CD8-positive, alpha-beta T cell (primary cell): ENCODE measurements at regions of chr14 and their contacts with region 1.

Region 1: GRCh38 chr14:100375963-100376735 is 53.0 kb downstream of the SLC25A47 start:
- DNase-seq: peak; percentile 86 to 96 (median 90)
- ATAC-seq: peak; percentile 81
- H3K4me3 ChIP-seq: peak within 1 kb of the TSS; percentile 63 to 85
- H3K4me3 Mint-ChIP-seq: peak within 1 kb of the TSS; percentile 92
- H3K27ac ChIP-seq: peak within 1 kb of the TSS; percentile 64 to 90
- H3K27ac Mint-ChIP-seq: peak within 1 kb of the TSS; percentile 91
- H3K4me1 ChIP-seq: peaks cover 23% of the 10 kb centered on the region
- H3K4me1 Mint-ChIP-seq: peaks cover 41% of the 10 kb centered on the region
- H3K27me3 ChIP-seq: no peaks in the 10 kb centered on the region
- H3K27me3 Mint-ChIP-seq: no peaks in the 10 kb centered on the region
- CTCF ChIP-seq: no peak

Region 2: DNA sequence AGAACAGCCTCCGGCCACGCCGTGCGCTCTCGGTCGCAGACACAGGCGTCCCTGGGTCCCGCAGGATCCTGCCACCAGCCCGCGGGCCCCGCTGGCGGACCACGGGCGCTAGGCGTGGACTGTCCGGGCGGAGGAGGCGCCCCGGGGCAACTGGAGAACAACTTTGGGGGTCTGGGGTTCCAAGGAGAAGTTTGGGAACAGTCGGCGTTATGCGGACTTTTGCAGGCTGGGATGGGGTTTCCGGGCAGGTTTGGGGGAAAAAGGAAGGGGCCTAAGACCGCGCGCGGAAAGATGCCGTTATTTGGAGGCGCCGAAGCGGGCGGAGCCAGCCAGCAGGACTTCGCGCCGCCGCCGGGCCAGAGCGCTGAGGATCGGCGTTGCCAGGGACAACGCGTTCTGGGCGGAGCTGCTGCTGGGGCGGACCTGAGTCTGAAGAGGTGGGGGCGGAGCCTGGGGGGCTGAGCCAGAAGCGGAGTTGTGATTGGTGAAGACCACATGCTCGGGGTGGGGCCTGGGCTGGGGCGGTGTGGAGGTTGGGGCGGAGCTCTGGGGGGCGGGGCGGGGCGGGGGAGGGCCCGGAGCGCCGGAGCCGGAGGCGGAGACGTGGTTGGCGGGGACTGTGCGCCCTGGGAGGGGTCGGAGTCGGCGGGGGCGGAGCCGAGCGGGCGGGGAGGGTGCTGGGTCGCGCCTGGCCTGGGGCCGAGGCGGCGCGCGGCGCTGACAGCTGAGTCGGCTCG is 692.4 kb before region 1 on chr14 and contains the start of gene CYP46A1:
- CTCF ChIA-PET with region 1: no interaction called
- POLR2A ChIA-PET with region 1: no interaction called
- intact Hi-C with region 1: loop called in 1 of 2 experiments (anchors 5 kb)
- DNase-seq: peak; percentile 99 to 100 (median 99)
- ATAC-seq: peak; percentile 95
- H3K4me3 ChIP-seq: peak within 1 kb of the TSS; percentile 83 to 93
- H3K4me3 Mint-ChIP-seq: peak within 1 kb of the TSS; percentile 96
- H3K27ac ChIP-seq: peak within 1 kb of the TSS; percentile 69 to 84
- H3K27ac Mint-ChIP-seq: peak within 1 kb of the TSS; percentile 77
- H3K4me1 ChIP-seq: peaks cover 8% of the 10 kb centered on the region
- H3K4me1 Mint-ChIP-seq: peaks cover 14% of the 10 kb centered on the region
- H3K27me3 ChIP-seq: peaks cover 0 to 10% of the 10 kb centered on the region in 2 experiments
- H3K27me3 Mint-ChIP-seq: peaks cover 7% of the 10 kb centered on the region
- CTCF ChIP-seq: no peak
- total RNA-seq, gene CYP46A1: 0.19 to 0.30 TPM

Region 3: DNA sequence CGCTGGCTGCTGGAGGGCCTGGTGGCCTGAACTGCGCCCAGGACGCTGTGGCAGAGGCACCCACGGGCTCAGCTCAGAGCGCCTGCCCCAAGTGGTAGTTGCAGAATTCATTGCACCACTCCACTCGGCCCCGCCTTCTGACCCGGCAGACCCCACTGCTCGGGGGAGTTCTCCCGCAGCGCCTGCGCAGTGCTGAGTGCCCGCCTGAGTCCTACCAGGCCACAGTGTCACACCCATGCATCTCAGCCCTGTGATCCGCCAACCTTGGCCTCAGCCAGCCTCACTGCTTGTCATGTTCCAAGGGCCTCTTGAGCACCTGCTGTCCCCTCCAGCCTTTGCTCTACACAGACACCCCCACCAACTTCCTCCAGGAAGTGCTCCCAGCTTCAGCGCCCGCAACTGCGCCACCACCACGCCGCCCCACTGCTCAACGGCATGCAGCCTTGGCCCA is 228.9 kb before region 1 on chr14:
- CTCF ChIA-PET with region 1: no interaction called
- POLR2A ChIA-PET with region 1: no interaction called
- intact Hi-C with region 1: loop called in 1 of 2 experiments (anchors 5 kb)
- DNase-seq: peak; percentile 42 to 87 (median 75)
- ATAC-seq: peak; percentile 89
- H3K4me3 ChIP-seq: peak overlapping the region; percentile 24 to 34
- H3K4me3 Mint-ChIP-seq: peak overlapping the region; percentile 77
- H3K27ac ChIP-seq: peak overlapping the region; percentile 3 to 39
- H3K27ac Mint-ChIP-seq: peak overlapping the region; percentile 89
- H3K4me1 ChIP-seq: peaks cover 24% of the 10 kb centered on the region
- H3K4me1 Mint-ChIP-seq: peaks cover 34% of the 10 kb centered on the region
- H3K27me3 ChIP-seq: no peaks in the 10 kb centered on the region
- H3K27me3 Mint-ChIP-seq: no peaks in the 10 kb centered on the region
- CTCF ChIP-seq: peak; percentile 7

Region 4: DNA sequence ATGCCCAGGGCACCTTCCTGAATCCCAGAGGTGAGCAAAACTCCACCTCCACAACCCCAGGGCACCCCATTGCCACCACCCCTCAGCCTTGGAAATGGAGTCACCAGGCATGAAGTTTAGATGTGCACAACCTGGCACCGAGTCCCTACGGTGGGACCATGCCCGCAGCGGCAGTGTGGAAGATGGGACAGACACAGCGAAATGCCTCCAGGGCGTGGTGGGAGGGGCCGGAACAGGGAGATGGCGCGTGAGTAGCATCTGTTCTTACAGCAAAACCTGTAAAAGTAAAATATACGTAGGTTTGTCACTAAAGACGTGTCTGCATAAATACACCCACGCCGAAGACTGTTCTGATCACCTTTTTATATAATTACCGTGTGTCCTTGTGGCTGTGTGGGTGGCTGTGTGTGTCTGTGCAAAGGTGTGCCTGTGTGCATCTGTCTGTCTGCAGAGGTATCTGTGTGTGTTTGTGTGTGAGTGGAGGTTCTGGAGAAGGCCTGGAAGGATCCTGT is 199.3 kb before region 1 on chr14:
- CTCF ChIA-PET with region 1: no interaction called
- POLR2A ChIA-PET with region 1: no interaction called
- intact Hi-C with region 1: no loop called
- DNase-seq: no peak
- ATAC-seq: no peak
- H3K4me3 ChIP-seq: no peak overlapping the region
- H3K4me3 Mint-ChIP-seq: no peak overlapping the region
- H3K27ac ChIP-seq: no peak overlapping the region
- H3K27ac Mint-ChIP-seq: no peak overlapping the region
- H3K4me1 ChIP-seq: no peaks in the 10 kb centered on the region
- H3K4me1 Mint-ChIP-seq: no peaks in the 10 kb centered on the region
- H3K27me3 ChIP-seq: no peaks in the 10 kb centered on the region
- H3K27me3 Mint-ChIP-seq: no peaks in the 10 kb centered on the region
- CTCF ChIP-seq: no peak

Region 5: DNA sequence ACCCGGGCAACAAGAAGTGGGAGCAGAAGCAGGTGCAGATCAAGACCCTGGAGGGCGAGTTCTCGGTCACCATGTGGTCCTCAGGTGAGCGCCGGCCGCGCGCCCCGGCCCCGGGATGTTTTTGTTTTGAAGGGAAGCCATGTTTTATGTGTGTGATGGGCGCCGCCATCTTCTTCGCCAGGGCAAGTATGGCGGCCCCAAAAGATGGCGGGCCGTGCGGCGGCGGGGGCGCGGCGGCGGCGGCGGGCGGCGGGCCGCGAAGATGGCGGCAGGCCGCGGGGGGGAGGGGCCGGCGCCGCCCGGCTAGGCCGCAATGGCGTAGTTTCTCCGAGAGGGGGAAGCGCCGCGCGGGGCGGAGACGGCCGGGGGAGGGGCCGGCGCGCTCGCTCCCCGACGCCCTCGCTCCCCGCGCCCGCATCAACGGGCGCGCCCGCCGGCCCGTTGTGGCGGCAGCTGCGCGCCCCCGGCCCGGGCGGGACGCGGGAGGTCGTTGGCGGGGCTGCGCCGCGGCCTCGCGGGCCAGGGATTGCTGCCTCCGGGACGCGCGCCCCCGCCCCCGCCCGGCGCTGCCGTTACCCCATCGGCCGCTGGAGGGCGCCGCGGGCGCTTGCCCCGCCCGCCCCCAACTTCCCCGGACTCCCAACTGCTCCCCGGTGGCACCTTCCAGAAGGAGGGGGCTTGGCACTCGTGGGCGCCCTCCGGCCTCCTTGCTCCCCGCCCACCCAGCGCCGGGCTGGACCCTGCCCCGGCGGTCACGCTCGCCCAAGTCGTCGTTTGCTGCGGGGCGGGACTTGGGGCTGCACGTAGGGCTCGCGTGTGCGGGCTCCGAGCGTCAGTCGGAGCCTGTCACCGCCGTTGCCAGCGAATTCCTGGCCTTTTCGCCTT is 136.1 kb before region 1 on chr14:
- CTCF ChIA-PET with region 1: no interaction called
- POLR2A ChIA-PET with region 1: no interaction called
- intact Hi-C with region 1: loop called (anchors 1 kb)
- DNase-seq: peak; percentile 68 to 92 (median 84)
- ATAC-seq: peak; percentile 36
- H3K4me3 ChIP-seq: peak overlapping the region; percentile 66 to 77
- H3K4me3 Mint-ChIP-seq: peak overlapping the region; percentile 90
- H3K27ac ChIP-seq: peak overlapping the region; percentile 56 to 85
- H3K27ac Mint-ChIP-seq: peak overlapping the region; percentile 94
- H3K4me1 ChIP-seq: peaks cover 56% of the 10 kb centered on the region
- H3K4me1 Mint-ChIP-seq: peaks cover 59% of the 10 kb centered on the region
- H3K27me3 ChIP-seq: no peaks in the 10 kb centered on the region
- H3K27me3 Mint-ChIP-seq: no peaks in the 10 kb centered on the region
- CTCF ChIP-seq: peak; percentile 54

Region 6: GRCh38 chr14:100306420-100307219 is 69.5 kb before region 1 on chr14 and contains the start of gene SLC25A29:
- CTCF ChIA-PET with region 1: interaction called, 3 read pairs
- POLR2A ChIA-PET with region 1: no interaction called
- intact Hi-C with region 1: loop called (anchors 1 kb)
- DNase-seq: peak; percentile 39 to 89 (median 76)
- ATAC-seq: peak; percentile 77
- H3K4me3 ChIP-seq: peak within 1 kb of the TSS; percentile 60 to 76
- H3K4me3 Mint-ChIP-seq: peak within 1 kb of the TSS; percentile 86
- H3K27ac ChIP-seq: no peak within 1 kb of the TSS
- H3K27ac Mint-ChIP-seq: peak within 1 kb of the TSS; percentile 60
- H3K4me1 ChIP-seq: peaks cover 18% of the 10 kb centered on the region
- H3K4me1 Mint-ChIP-seq: peaks cover 18% of the 10 kb centered on the region
- H3K27me3 ChIP-seq: no peaks in the 10 kb centered on the region
- H3K27me3 Mint-ChIP-seq: no peaks in the 10 kb centered on the region
- CTCF ChIP-seq: no peak
- total RNA-seq, gene SLC25A29: 19.4 to 22.8 TPM

Region 7: GRCh38 chr14:102316743-102317563 is 1940.8 kb after region 1 on chr14:
- CTCF ChIA-PET with region 1: no interaction called
- POLR2A ChIA-PET with region 1: no interaction called
- intact Hi-C with region 1: loop called in 1 of 2 experiments (anchors 5 kb)
- DNase-seq: peak; percentile 86 to 100 (median 95)
- ATAC-seq: peak; percentile 55
- H3K4me3 ChIP-seq: peak overlapping the region; percentile 57 to 74
- H3K4me3 Mint-ChIP-seq: peak overlapping the region; percentile 93
- H3K27ac ChIP-seq: peak overlapping the region; percentile 42 to 73
- H3K27ac Mint-ChIP-seq: peak overlapping the region; percentile 94
- H3K4me1 ChIP-seq: peaks cover 42% of the 10 kb centered on the region
- H3K4me1 Mint-ChIP-seq: peaks cover 59% of the 10 kb centered on the region
- H3K27me3 ChIP-seq: no peaks in the 10 kb centered on the region
- H3K27me3 Mint-ChIP-seq: no peaks in the 10 kb centered on the region
- CTCF ChIP-seq: peak; percentile 82